Dorsolateral prefrontal cortex (tissue), 120 donors: ENCODE measurements at regions of chr15 and their contacts with region 1.

Region 1: DNA sequence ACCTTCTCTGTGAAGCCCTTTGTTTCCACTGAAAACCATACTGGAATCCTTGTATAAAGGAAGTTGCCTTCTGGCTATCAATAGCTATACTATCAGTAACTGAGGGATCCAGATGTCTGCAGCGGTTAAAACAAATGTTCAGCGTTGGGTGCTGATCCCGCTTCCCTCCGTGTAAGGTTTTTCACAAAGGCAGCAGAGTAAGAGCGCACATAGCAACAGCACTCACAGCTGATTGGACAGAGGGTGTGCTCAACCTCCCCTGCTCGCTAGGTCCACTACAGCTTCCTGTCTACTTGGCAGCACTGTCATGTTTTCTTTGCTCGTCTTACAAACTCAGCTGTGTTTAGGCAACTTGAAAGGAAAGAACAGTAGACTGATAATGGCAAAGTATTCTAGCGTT is 27.3 kb downstream of the ATOSA start:
- DNase-seq: peak in 9 of 10 donors; percentile 53 to 78 (median 68)
- H3K4me3 ChIP-seq: peak overlapping the region; percentile 6 to 67 (median 46)
- H3K27ac ChIP-seq: peak overlapping the region in 58 of 59 donors; percentile 8 to 90 (median 69)
- H3K27me3 ChIP-seq: no peaks in the 10 kb centered on the region
- CTCF ChIP-seq: peak in 4 of 56 donors; percentile 12 to 30 (median 18)

Region 2: GRCh38 chr15:52615284-52615683 is 36.6 kb before region 1 on chr15:
- intact Hi-C with region 1: no loop called
- DNase-seq: no peak
- H3K4me3 ChIP-seq: no peak overlapping the region
- H3K27ac ChIP-seq: no peak overlapping the region
- H3K27me3 ChIP-seq: no peaks in the 10 kb centered on the region
- CTCF ChIP-seq: no peak

Region 3: DNA sequence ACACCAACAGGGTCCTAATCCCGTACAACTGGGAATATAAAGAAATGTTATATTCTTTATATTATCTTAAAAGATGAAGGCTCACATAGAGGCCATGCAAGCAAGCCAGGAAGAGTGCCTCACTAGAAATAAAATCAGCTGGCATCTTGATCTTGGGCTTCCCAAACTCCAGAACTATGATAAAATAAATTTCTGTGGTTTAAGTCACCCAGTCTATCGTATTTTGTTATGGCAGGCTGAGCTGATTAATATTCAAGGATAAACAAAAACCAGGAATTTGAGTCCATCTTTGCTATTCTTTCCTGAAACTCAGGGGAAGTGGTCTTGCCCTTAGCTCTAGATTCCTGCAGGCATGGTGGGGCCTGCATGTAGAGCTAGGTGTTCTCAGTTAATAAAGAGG is 15.4 kb before region 1 on chr15:
- intact Hi-C with region 1: no loop called
- DNase-seq: no peak
- H3K4me3 ChIP-seq: no peak overlapping the region
- H3K27ac ChIP-seq: no peak overlapping the region
- H3K27me3 ChIP-seq: no peaks in the 10 kb centered on the region
- CTCF ChIP-seq: no peak

Region 4: GRCh38 chr15:52679232-52680040 is 27.6 kb after region 1 on chr15 and contains the start of gene ATOSA:
- intact Hi-C with region 1: loop called in 1 of 2 experiments (anchors 2 kb)
- DNase-seq: peak; percentile 92 to 98 (median 96)
- H3K4me3 ChIP-seq: peak within 1 kb of the TSS; percentile 62 to 99 (median 90)
- H3K27ac ChIP-seq: peak within 1 kb of the TSS; percentile 77 to 99 (median 96)
- H3K27me3 ChIP-seq: no peaks in the 10 kb centered on the region
- CTCF ChIP-seq: peak in 38 of 56 donors; percentile 3 to 53 (median 30)
- total RNA-seq, gene ATOSA: 34.8 to 88.4 (median 52.9) TPM